Endothelial cell of umbilical vein (primary cell): ENCODE measurements at regions of chr3 and their contacts with region 1.

Region 1: DNA sequence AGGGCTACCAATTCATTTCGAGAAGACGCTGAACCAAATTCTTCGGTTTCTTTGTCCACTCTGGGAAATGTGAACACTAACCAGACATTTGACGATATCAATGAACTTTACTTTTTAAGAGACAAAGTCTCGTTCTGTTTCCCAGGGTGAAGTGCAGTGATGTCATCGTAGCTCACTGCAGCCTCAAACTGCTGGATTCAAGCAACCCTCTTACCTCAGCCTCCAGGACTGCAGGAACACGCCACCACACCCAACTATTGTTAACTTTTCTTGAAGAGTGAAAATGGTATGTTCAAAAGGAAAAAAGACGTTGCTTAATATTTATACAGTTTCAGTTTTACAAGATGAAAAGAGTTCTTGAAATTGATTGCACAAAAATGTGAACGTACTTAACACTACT is 30.6 kb downstream of the MB21D2 start:
- DNase-seq: peak; percentile 58
- H3K4me3 ChIP-seq: peak overlapping the region in 1 of 3 experiments; percentile 30
- H3K27ac ChIP-seq: peak overlapping the region; percentile 91
- H3K4me1 ChIP-seq: peaks cover 73% of the 10 kb centered on the region
- H3K27me3 ChIP-seq: no peaks in the 10 kb centered on the region
- CTCF ChIP-seq: no peak
- POLR2A ChIP-seq: no peak

Region 2: GRCh38 chr3:191356611-191357439 is 1530.2 kb before region 1 on chr3:
- CTCF ChIA-PET with region 1: no interaction called
- POLR2A ChIA-PET with region 1: no interaction called
- dilution Hi-C with region 1: no loop called
- intact Hi-C with region 1: loop called (anchors 5 kb)
- DNase-seq: peak; percentile 73
- H3K4me3 ChIP-seq: peak overlapping the region in 1 of 3 experiments; percentile 9
- H3K27ac ChIP-seq: peak overlapping the region; percentile 55
- H3K4me1 ChIP-seq: peaks cover 64% of the 10 kb centered on the region
- H3K27me3 ChIP-seq: no peaks in the 10 kb centered on the region
- CTCF ChIP-seq: no peak
- POLR2A ChIP-seq: no peak

Region 3: DNA sequence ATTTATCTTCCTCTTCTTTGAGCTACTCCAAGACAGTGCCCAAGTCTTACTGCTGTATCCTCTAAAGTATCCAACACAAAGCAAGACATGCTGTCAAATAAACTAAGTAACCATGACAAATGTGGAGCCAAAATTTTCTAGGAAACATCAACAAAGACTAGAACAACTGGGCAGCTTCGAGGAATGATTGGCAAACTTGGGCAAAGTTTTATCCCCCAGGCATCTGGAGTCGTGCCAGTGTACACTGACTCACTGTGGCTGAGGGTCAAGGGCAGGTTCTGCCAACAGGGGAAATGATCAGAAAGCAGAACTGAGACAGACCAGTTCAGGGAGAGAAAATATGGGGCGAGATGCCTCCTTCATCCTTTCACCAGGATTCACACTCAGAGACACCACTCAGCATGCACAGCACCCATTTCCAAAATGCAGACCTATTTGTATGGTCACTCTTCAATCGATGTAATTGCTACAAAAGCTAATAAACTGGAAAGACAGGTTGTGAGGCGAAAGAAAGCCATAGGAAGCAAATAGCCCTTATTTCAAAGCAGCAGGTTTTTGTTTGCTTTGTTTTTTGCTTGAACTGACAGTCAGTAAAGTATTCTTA is 35.1 kb before region 1 on chr3:
- CTCF ChIA-PET with region 1: interaction called, 4 read pairs
- POLR2A ChIA-PET with region 1: no interaction called
- dilution Hi-C with region 1: no loop called
- intact Hi-C with region 1: loop called (anchors 1 kb)
- DNase-seq: peak; percentile 92
- H3K4me3 ChIP-seq: no peak overlapping the region
- H3K27ac ChIP-seq: no peak overlapping the region
- H3K4me1 ChIP-seq: peaks cover 33% of the 10 kb centered on the region
- H3K27me3 ChIP-seq: no peaks in the 10 kb centered on the region
- CTCF ChIP-seq: no peak
- POLR2A ChIP-seq: no peak

Region 4: DNA sequence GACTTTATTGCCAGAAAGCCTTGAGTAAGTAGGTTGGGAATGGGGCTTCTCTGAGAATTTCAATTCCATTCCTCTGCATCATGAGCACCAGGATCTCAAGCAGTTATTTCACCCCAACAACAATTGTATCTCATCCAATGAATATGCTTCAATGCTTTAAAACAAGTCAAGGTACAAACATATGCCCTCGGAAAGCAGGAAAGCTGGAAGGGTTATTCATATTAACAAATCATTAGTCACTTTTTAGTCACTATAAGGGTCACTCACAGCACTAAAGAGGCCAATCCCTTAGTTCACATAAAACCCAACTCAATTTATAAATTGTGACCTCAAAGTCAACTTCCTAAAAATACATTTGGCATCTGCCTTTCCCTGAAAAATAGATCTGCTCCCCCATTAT is 14.4 kb after region 1 on chr3:
- CTCF ChIA-PET with region 1: interaction called, 3 read pairs
- POLR2A ChIA-PET with region 1: no interaction called
- dilution Hi-C with region 1: no loop called
- intact Hi-C with region 1: loop called (anchors 1 kb)
- DNase-seq: peak; percentile 65
- H3K4me3 ChIP-seq: no peak overlapping the region
- H3K27ac ChIP-seq: peak overlapping the region; percentile 9
- H3K4me1 ChIP-seq: peaks cover 11% of the 10 kb centered on the region
- H3K27me3 ChIP-seq: no peaks in the 10 kb centered on the region
- CTCF ChIP-seq: no peak
- POLR2A ChIP-seq: no peak

Region 5: DNA sequence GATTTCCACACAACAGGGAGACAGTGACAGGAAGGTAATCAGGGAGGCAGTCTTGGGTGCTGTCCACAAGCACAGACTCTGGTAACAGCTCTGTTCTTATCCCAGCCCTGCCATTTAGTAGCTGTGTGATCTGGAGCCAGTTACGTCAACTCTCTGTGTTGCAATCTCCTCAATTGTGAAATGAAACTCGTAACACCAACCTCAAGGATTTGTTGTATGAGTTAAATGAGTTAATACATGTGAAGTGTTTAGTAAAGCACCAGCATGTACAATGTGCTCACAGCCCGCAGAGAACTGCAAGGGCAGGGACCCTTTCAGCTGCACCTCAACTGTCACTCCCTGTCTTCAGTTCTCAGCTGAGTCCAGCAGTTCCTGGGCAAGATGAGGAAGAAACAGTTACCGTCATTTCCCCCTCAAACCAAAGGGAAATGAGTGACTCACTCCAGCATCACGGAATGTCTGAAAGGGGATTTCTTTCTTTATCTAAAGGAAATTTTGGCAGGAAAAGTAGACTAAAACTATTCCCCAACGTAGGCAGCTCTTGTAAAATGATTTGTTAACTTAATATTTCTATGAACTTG is 70.5 kb after region 1 on chr3:
- CTCF ChIA-PET with region 1: no interaction called
- POLR2A ChIA-PET with region 1: no interaction called
- dilution Hi-C with region 1: no loop called
- intact Hi-C with region 1: loop called (anchors 1 kb)
- DNase-seq: peak; percentile 90
- H3K4me3 ChIP-seq: peak overlapping the region in 1 of 3 experiments; percentile 24
- H3K27ac ChIP-seq: peak overlapping the region; percentile 92
- H3K4me1 ChIP-seq: peaks cover 21% of the 10 kb centered on the region
- H3K27me3 ChIP-seq: no peaks in the 10 kb centered on the region
- CTCF ChIP-seq: no peak
- POLR2A ChIP-seq: no peak

Region 6: DNA sequence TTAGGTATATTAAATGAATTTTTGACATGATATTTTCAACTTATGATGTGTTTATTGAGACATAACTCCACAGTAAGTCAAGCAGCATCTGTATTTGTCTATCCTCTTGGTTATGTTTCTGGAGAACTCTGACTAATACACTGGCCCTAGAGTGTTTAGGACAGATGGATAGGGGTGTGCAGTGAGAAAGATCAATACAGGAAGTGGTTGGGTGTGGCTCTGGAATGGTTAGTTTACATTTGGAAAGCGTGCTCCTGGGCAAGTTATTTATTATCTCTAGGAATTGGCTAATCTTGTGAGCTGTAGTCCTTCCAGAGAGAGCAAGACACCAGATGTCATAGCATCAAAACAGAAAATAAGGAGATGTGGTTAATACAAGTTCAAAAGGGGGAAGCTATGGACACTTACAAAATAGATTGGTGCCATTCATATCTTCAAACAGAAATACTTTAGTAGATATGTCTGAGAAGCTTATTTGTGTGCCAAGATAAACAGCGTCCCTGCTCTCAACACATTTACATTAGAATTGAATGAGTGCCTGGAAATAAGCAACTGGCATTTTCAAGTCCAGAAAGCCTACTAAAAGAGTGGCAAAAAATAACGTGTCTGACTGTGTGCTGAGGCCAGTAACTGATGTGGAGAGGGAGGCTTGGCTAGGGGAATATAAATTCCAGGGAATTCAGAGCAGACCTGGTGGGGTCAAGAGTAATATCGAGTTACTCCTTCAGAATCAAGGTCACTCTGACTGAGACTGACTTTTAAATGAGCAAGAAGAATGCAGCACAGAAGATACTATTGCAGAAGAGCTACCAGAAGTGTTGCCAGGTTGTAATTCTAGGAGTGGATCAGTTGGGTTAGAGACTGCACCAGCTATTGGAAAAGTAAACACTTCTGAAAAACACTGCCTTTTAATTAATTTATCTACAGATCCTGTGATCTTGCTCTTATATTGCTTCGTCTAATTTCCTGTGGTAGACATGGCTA is 320.5 kb after region 1 on chr3:
- CTCF ChIA-PET with region 1: no interaction called
- POLR2A ChIA-PET with region 1: no interaction called
- dilution Hi-C with region 1: no loop called
- intact Hi-C with region 1: no loop called
- DNase-seq: no peak
- H3K4me3 ChIP-seq: no peak overlapping the region
- H3K27ac ChIP-seq: no peak overlapping the region
- H3K4me1 ChIP-seq: no peaks in the 10 kb centered on the region
- H3K27me3 ChIP-seq: no peaks in the 10 kb centered on the region
- CTCF ChIP-seq: no peak
- POLR2A ChIP-seq: no peak

Region 7: GRCh38 chr3:193592944-193593667 is 706.1 kb after region 1 on chr3 and contains the start of gene OPA1:
- CTCF ChIA-PET with region 1: no interaction called
- POLR2A ChIA-PET with region 1: no interaction called
- dilution Hi-C with region 1: no loop called
- intact Hi-C with region 1: loop called (anchors 5 kb)
- DNase-seq: peak; percentile 98
- H3K4me3 ChIP-seq: peak within 1 kb of the TSS; percentile 56 to 94 (median 85)
- H3K27ac ChIP-seq: peak within 1 kb of the TSS; percentile 80
- H3K4me1 ChIP-seq: peaks cover 18% of the 10 kb centered on the region
- H3K27me3 ChIP-seq: no peaks in the 10 kb centered on the region
- CTCF ChIP-seq: peak in 1 of 2 donors; percentile 24
- POLR2A ChIP-seq: peak; percentile 75
- total RNA-seq, gene OPA1: 57.8 and 62.0 TPM in 2 replicates